ENCODE measurements at regions of chr12 and their contacts with region 1.

Region 1: DNA sequence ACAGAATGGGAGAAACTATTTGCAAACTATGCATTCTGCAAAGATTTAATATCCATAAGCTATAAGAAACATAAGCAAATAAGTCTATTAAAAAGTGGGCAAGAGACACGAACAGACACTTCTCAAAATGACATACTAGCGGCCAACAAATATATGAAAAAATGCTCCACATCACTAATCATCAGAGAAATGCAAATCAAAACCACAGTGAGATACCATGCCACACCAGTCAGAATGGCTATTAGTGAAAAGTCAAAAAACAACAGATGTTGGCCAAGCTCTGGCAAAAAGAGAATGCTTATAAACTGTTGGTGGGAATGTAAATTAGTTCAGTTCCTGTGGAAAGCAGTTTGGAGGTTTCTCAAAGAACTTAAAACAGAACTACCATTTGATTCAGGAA is 121.3 kb downstream of the KCNMB4 start:
- DNase-seq: no peak
- H3K4me3 ChIP-seq: no peak overlapping the region
- H3K27ac ChIP-seq: no peak overlapping the region
- H3K4me1 ChIP-seq: no peaks in the 10 kb centered on the region
- H3K27me3 ChIP-seq: no peaks in the 10 kb centered on the region
- CTCF ChIP-seq: no peak

Region 2: DNA sequence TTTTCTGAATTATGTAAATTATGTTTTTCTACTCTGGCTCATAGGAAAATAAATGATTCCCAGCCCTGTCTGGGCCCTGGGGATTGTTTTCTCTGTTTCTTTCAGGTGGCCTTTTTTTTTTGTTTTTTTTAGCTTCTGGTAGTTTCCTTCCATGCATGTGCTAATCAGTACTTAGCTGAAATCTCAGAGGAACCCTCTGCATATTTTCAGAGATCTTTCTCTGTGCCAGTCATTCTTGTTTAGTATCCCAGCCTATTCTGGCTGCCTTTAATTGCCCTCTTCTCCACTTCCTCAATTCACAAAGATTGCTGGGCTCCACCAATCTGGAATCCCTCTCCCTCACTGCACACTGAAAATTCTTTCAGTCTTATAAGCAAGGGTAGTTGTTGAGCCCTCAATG is 197.3 kb before region 1 on chr12:
- CTCF ChIA-PET with region 1: interaction called, 11 read pairs
- dilution Hi-C with region 1: no loop called
- in situ Hi-C with region 1: no loop called
- intact Hi-C with region 1: no loop called
- DNase-seq: no peak
- H3K4me3 ChIP-seq: no peak overlapping the region
- H3K27ac ChIP-seq: no peak overlapping the region
- H3K4me1 ChIP-seq: no peaks in the 10 kb centered on the region
- H3K27me3 ChIP-seq: no peaks in the 10 kb centered on the region
- CTCF ChIP-seq: no peak

Region 3: DNA sequence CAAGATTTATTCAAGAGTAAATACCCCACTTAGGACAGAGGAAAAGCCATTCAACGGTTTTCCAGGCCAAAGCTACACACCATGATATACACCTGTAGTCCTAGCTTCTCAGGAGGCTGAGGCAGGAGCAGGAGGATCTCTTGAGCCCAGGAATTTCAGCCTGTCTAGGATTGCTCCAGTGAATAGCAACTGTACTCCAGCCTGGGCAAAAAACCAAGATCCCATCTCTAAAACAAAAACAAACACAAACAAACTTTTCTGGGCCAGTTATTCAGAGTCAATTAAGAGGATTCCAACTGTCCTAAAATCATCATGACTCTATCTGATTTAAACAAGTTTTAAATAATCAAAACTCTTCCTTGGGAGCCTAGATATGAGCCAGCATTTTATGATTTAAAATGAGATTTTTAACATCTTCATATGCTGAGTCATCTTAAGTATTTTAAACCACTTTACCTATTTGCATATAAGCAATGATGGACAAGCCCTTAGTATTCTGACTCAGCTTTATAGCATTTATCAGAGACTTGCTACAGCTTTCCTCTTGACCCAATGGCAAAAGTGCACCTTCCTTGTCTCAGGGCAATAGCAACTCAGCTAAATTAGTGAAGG is 44.3 kb before region 1 on chr12:
- CTCF ChIA-PET with region 1: no interaction called
- dilution Hi-C with region 1: no loop called
- in situ Hi-C with region 1: no loop called
- intact Hi-C with region 1: no loop called
- DNase-seq: peak; percentile 35
- H3K4me3 ChIP-seq: no peak overlapping the region
- H3K27ac ChIP-seq: no peak overlapping the region
- H3K4me1 ChIP-seq: peaks cover 8% of the 10 kb centered on the region
- H3K27me3 ChIP-seq: no peaks in the 10 kb centered on the region
- CTCF ChIP-seq: no peak

Measured in mammary epithelial cell (primary cell).